CD8-positive, alpha-beta T cell (primary cell): ENCODE measurements at regions of chr6 and their contacts with region 1.

Region 1: DNA sequence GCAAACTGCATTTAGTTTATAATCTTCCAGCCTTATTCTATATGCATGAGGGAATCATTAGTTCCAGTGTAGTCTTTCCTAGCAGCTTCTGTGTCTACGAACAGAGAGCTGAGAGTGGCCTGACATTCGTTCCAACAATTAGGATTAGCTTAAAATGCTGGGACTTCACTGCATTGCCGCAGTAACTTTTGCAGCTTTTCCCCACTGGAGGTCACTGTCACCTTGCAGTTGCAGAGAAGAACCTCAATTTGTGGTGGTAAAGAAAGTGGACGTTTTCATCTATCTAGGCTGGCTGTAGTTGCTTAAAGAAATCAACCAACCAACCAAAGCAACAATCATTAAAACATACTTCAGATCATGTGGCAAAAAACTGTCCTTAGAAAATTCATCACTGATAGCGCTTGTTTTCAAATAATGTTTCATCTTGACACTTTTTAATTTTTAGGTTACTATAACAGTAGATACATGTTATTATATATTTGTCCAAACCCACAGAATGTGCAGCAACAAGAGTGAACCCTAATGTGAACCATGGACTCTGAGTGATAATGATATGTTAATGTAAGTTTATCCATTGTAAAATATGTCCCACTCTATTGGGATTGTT is 12.2 kb downstream of the MYLK4 start:
- DNase-seq: peak in 8 of 9 experiments; percentile 26 to 71 (median 60)
- ATAC-seq: peak; percentile 77
- H3K4me3 ChIP-seq: no peak overlapping the region
- H3K4me3 Mint-ChIP-seq: no peak overlapping the region
- H3K27ac ChIP-seq: no peak overlapping the region
- H3K27ac Mint-ChIP-seq: no peak overlapping the region
- H3K4me1 ChIP-seq: no peaks in the 10 kb centered on the region
- H3K4me1 Mint-ChIP-seq: no peaks in the 10 kb centered on the region
- H3K27me3 ChIP-seq: no peaks in the 10 kb centered on the region
- H3K27me3 Mint-ChIP-seq: peaks cover 4% of the 10 kb centered on the region
- CTCF ChIP-seq: peak; percentile 70

Region 2: DNA sequence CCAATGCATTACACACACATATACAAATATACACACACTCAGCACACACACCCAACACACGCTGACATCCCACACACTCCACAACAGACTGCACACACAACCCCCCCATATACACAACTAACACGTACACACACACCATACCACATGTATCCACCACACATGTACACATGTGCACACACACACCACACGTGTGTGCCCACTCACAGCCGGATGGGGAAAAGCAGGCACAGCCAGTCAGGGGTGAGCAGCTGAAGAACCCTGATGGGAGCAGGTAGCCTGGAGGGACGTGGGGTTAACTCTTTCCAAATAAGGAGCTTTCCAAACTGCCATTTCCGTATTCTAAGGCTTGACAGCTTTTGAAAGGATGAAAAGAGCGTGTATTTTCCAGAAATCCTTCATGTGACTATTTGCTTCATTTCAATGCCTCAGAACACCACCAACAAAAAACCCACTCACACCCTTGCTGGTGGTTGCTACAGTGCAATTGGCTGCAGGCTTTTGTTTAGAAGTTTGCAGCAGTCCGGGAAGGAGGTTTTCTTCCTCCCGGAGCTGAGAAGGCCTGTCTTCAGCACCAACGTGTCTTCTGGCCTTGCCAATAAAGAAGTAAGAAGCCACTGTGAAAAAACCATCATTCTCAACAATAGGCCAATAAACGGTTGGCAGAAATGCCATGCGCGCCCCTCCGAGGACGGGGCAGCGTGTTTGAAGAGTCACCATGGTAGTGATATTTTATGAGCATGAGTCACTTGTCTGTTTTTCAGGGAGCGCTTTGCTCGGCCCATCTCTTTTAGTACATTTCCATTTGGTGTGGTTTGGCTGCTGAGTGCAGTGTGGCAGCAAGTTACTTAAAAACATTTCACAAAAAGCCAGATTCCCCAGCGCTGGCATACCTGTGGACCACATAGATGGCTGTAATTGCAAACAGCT is 361.8 kb before region 1 on chr6:
- CTCF ChIA-PET with region 1: no interaction called
- POLR2A ChIA-PET with region 1: no interaction called
- intact Hi-C with region 1: no loop called
- DNase-seq: no peak
- ATAC-seq: no peak
- H3K4me3 ChIP-seq: no peak overlapping the region
- H3K4me3 Mint-ChIP-seq: no peak overlapping the region
- H3K27ac ChIP-seq: no peak overlapping the region
- H3K27ac Mint-ChIP-seq: no peak overlapping the region
- H3K4me1 ChIP-seq: no peaks in the 10 kb centered on the region
- H3K4me1 Mint-ChIP-seq: no peaks in the 10 kb centered on the region
- H3K27me3 ChIP-seq: no peaks in the 10 kb centered on the region
- H3K27me3 Mint-ChIP-seq: no peaks in the 10 kb centered on the region
- CTCF ChIP-seq: no peak

Region 3: DNA sequence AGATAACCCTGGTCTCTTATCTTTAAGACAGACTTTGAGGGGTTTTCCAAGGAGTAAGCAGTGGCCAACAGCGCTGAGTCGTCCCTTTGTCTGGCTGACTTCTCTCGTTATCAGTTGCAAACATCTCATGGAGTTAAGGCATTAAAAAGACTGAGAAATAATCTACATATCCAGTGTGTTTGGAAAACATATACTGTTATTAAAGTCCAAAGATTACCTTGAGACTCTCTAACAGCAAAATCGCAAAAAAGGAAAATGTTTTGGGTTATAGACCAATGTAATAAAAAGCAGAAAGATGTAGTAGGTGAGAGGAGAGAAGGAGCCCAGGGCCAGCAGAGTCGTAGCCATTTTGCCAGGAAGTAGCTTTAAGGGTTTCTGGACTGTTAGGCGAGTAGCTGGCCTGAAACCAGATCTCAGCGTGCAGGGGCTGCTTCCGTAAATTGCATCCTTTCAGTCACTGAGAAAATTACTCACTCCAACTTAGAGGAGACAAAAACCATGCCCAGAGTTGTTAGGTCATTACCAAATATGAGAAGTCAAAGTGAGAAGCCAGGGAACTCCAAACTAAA is 12.4 kb before region 1 on chr6:
- CTCF ChIA-PET with region 1: interaction called, 11 read pairs
- POLR2A ChIA-PET with region 1: interaction called, 3 read pairs
- intact Hi-C with region 1: no loop called
- DNase-seq: peak in 1 of 9 experiments; percentile 24
- ATAC-seq: no peak
- H3K4me3 ChIP-seq: no peak overlapping the region
- H3K4me3 Mint-ChIP-seq: no peak overlapping the region
- H3K27ac ChIP-seq: no peak overlapping the region
- H3K27ac Mint-ChIP-seq: no peak overlapping the region
- H3K4me1 ChIP-seq: no peaks in the 10 kb centered on the region
- H3K4me1 Mint-ChIP-seq: no peaks in the 10 kb centered on the region
- H3K27me3 ChIP-seq: no peaks in the 10 kb centered on the region
- H3K27me3 Mint-ChIP-seq: peaks cover 4% of the 10 kb centered on the region
- CTCF ChIP-seq: no peak

Region 4: GRCh38 chr6:2749969-2750600 is 11.6 kb after region 1 on chr6:
- CTCF ChIA-PET with region 1: interaction called, 110 read pairs
- POLR2A ChIA-PET with region 1: interaction called, 4 read pairs
- intact Hi-C with region 1: loop called in 1 of 2 experiments (anchors 1 kb)
- DNase-seq: peak; percentile 46 to 78 (median 71)
- ATAC-seq: peak; percentile 86
- H3K4me3 ChIP-seq: no peak overlapping the region
- H3K4me3 Mint-ChIP-seq: no peak overlapping the region
- H3K27ac ChIP-seq: no peak overlapping the region
- H3K27ac Mint-ChIP-seq: no peak overlapping the region
- H3K4me1 ChIP-seq: peaks cover 8% of the 10 kb centered on the region
- H3K4me1 Mint-ChIP-seq: peaks cover 6% of the 10 kb centered on the region
- H3K27me3 ChIP-seq: peaks cover 0 to 2% of the 10 kb centered on the region in 2 experiments
- H3K27me3 Mint-ChIP-seq: peaks cover 5% of the 10 kb centered on the region
- CTCF ChIP-seq: peak; percentile 99

Region 5: DNA sequence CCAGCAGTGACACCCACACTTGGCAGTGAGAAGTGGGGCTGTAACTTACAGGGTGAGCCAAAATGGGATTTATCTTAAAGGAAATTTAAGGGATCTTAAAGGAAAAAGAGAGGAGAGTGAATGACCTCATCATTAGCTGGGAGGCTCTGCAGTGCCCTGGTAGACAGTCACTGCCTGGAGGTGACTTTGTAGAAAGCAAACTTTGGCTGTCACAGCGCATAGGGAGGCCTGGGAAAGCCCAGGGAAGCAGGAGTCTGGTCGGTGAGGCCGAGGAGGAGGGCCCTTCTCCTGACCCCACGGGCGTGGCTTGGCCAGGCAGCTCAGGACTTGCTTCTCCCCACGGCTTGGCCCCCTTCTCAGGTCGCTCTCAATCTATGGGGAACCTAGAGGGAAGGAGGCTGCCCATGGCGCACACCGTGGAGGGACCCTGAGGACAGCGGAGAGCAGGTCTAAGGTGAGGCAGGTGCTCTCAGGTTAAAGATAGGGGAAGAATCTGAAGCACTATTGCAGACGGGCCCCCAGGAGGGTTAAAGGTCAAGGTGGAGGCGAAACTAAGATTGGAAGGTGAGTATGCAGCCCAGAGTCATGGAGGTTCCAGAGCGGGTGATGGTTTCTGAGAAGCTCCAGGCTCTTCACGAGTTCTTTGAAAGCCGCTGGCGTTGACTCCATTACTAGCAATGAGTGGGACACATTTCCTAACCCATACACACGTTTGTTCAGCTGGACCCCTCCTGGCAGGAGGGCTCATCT is 314.2 kb after region 1 on chr6:
- CTCF ChIA-PET with region 1: no interaction called
- POLR2A ChIA-PET with region 1: no interaction called
- intact Hi-C with region 1: loop called in 1 of 2 experiments (anchors 2 kb)
- DNase-seq: no peak
- ATAC-seq: no peak
- H3K4me3 ChIP-seq: no peak overlapping the region
- H3K4me3 Mint-ChIP-seq: peak overlapping the region; percentile 70
- H3K27ac ChIP-seq: no peak overlapping the region
- H3K27ac Mint-ChIP-seq: no peak overlapping the region
- H3K4me1 ChIP-seq: peaks cover 8% of the 10 kb centered on the region
- H3K4me1 Mint-ChIP-seq: peaks cover 13% of the 10 kb centered on the region
- H3K27me3 ChIP-seq: no peaks in the 10 kb centered on the region
- H3K27me3 Mint-ChIP-seq: no peaks in the 10 kb centered on the region
- CTCF ChIP-seq: no peak